K562 (cell line): ENCODE measurements at regions of chr16 and their contacts with region 1.

Region 1: DNA sequence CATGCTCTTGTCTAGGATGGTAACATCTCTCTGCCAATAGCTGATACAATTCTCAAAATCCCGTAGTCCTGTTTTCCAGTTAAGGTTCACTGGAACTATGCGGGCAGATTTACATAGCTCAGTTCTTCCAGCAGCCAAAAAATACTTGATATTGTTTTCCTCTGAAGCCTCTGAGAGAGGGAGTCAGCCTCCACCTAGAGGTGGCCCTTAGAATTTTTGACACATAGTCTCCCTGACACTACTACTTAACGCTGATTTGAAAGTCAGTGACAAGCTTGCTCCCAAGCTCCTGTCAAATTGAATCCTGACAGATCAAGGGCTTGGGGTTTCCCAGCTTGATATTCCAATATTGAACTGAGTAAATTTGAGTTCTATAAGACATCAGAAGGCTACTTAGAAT is 1780.1 kb downstream of the TP53TG3F start:
- DNase-seq: no peak
- ATAC-seq: no peak
- H3K4me3 ChIP-seq: no peak overlapping the region
- H3K27ac ChIP-seq: no peak overlapping the region
- H3K4me1 ChIP-seq: no peaks in the 10 kb centered on the region
- H3K27me3 ChIP-seq: no peaks in the 10 kb centered on the region
- CTCF ChIP-seq: no peak
- EP300 ChIP-seq: no peak
- POLR2A ChIP-seq: no peak
- RAD21 ChIP-seq: no peak

Region 2: DNA sequence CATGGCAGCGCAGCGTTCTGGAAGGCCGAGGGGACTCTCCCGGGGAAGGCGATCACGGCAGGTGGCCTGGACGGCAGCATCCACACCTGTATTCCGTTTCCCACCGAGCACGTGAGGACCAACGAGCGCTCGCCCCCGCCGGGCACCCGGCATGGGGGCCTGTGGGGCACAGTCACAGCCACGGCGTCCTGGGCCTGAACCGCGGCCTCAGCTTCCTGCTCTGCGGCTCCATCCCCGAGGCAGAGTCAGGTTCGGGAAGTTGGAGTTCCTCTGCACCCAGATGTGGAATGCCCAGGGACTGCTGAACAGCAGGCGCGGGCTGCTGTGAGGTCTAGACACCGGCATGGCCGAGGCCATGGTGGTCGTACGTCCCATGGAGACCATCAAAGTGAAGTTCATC is 66.3 kb before region 1 on chr16:
- CTCF ChIA-PET with region 1: no interaction called
- POLR2A ChIA-PET with region 1: no interaction called
- in situ Hi-C with region 1: no loop called
- intact Hi-C with region 1: loop called (anchors 10 kb)
- DNase-seq: no peak
- ATAC-seq: no peak
- H3K4me3 ChIP-seq: no peak overlapping the region
- H3K27ac ChIP-seq: no peak overlapping the region
- H3K4me1 ChIP-seq: no peaks in the 10 kb centered on the region
- H3K27me3 ChIP-seq: no peaks in the 10 kb centered on the region
- CTCF ChIP-seq: no peak
- EP300 ChIP-seq: no peak
- POLR2A ChIP-seq: no peak
- RAD21 ChIP-seq: no peak

Region 3: GRCh38 chr16:35533683-35534082 is 294.1 kb after region 1 on chr16:
- CTCF ChIA-PET with region 1: no interaction called
- POLR2A ChIA-PET with region 1: no interaction called
- in situ Hi-C with region 1: no loop called
- intact Hi-C with region 1: no loop called
- DNase-seq: no peak
- ATAC-seq: no peak
- H3K4me3 ChIP-seq: no peak overlapping the region
- H3K27ac ChIP-seq: no peak overlapping the region
- H3K4me1 ChIP-seq: no peaks in the 10 kb centered on the region
- H3K27me3 ChIP-seq: no peaks in the 10 kb centered on the region
- CTCF ChIP-seq: no peak
- EP300 ChIP-seq: no peak
- POLR2A ChIP-seq: no peak
- RAD21 ChIP-seq: no peak